WTC11 (cell line): ENCODE measurements at regions of chr10 and their contacts with region 1.

Region 1: GRCh38 chr10:71270301-71271220 is 48.5 kb upstream of the SLC29A3 start:
- DNase-seq: peak; percentile 72
- ATAC-seq: peak; percentile 68
- H3K4me3 Mint-ChIP-seq: peak overlapping the region; percentile 57
- H3K27ac Mint-ChIP-seq: peak overlapping the region; percentile 98
- H3K4me1 Mint-ChIP-seq: peaks cover 64% of the 10 kb centered on the region
- H3K27me3 Mint-ChIP-seq: no peaks in the 10 kb centered on the region
- CTCF ChIP-seq: no peak; the same call in 1 of the 2 replicates

Region 2: DNA sequence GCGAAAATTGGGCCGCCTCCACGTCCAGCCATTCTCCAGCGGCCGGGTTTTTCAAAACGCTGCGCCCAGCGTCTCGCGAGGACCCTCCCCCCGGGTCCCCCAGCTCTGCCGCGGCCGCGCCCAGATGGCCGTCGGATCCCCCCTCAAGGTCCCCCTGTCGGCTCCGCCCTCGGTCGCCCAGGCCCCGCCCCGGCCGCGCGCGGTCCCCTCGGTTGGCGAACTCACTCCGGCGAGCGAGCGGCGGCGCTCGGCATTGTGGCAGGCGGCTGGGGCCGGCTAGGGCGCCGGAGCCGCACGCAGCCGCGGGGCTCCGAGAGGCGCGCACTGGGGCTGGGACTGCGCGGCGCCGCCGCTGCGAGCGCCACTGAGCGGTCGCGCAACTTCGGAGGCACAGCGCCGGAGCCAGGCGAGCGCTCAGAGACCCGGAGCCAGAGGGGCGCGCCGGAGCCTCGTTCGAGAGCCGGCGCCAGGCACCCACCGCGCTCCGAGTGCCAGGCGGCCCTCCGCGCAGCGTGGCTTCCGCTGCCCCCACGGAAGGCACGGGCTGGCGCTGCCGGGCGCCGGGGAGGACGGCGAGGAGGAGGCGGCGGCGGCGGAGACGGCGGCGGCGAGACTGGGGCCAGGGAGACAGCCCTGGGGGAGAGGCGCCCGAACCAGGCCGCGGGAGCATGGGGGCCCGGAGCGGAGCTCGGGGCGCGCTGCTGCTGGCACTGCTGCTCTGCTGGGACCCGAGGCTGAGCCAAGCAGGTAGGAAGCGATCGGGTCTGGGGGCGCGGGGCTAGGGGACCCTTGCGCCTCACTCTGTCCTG is 58.0 kb before region 1 on chr10 and contains the start of gene UNC5B:
- CTCF ChIA-PET with region 1: interaction called, 67 read pairs
- POLR2A ChIA-PET with region 1: interaction called, 10 read pairs
- DNase-seq: peak; percentile 94
- ATAC-seq: peak; percentile 72
- H3K4me3 Mint-ChIP-seq: peak within 1 kb of the TSS; percentile 87
- H3K27ac Mint-ChIP-seq: 0 out of 2 replicates have a peak within 1 kb of the TSS, but pooled peaks have one; percentile 23
- H3K4me1 Mint-ChIP-seq: peaks cover 51% of the 10 kb centered on the region
- H3K27me3 Mint-ChIP-seq: peaks cover 41% of the 10 kb centered on the region
- CTCF ChIP-seq: 0 out of 2 replicates have a peak, but pooled peaks have one; percentile 10
- total RNA-seq, gene UNC5B: 31.2 to 49.6 TPM (median 31.6 TPM) in 3 replicates

Region 3: DNA sequence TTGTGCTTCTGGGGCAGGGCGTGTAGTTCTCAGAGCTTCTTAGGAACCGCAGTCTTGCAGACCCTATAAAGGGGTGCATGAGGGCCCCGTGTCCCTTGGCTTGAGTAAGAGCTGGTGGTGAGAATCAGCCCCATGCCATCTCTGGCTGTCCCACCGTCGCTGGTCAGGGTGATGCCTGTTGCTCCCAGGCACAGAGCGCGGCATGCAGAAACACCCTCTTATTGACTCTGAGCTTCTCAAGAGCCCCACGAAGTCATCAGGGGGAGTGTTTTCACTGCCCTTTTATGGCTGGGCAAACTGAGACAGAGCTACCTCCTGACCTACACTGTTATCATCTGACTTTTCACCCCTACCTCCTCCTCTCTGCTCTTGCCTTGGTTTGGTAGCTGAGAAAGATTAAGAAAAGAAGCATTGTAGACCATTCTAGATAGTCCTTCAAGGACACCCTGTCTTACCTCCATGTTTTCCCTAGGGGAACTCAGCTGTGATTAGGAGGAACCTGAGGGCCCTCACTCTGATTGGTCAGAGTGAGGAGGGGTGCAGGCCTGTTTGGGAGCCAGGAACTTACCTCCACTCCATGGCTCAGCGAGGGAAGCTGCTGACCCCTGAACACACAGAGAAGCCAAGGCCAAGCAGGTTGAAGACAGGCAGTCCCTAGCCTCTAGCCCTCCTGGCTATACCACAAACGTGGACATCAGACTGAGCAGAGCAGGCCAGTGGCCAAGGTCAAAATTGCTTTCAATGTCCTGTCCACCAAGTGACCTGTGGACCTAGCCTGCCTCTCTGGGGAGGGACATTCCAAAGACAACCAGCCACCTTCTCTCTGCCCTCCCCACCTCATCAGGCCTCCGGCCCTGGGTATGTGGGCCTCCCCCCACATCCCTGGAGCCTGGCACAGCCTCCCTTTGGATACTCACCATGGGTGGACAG is 40.6 kb before region 1 on chr10:
- CTCF ChIA-PET with region 1: interaction called, 11 read pairs
- POLR2A ChIA-PET with region 1: no interaction called
- DNase-seq: no peak
- ATAC-seq: no peak
- H3K4me3 Mint-ChIP-seq: no peak overlapping the region
- H3K27ac Mint-ChIP-seq: no peak overlapping the region; the same call in 1 of the 2 replicates
- H3K4me1 Mint-ChIP-seq: peaks cover 53% of the 10 kb centered on the region
- H3K27me3 Mint-ChIP-seq: no peaks in the 10 kb centered on the region
- CTCF ChIP-seq: no peak

Region 4: GRCh38 chr10:71244431-71245419 is 25.8 kb before region 1 on chr10:
- CTCF ChIA-PET with region 1: interaction called, 13 read pairs
- POLR2A ChIA-PET with region 1: no interaction called
- DNase-seq: no peak
- ATAC-seq: no peak
- H3K4me3 Mint-ChIP-seq: no peak overlapping the region
- H3K27ac Mint-ChIP-seq: no peak overlapping the region
- H3K4me1 Mint-ChIP-seq: peaks cover 27% of the 10 kb centered on the region
- H3K27me3 Mint-ChIP-seq: no peaks in the 10 kb centered on the region
- CTCF ChIP-seq: no peak

Region 5: DNA sequence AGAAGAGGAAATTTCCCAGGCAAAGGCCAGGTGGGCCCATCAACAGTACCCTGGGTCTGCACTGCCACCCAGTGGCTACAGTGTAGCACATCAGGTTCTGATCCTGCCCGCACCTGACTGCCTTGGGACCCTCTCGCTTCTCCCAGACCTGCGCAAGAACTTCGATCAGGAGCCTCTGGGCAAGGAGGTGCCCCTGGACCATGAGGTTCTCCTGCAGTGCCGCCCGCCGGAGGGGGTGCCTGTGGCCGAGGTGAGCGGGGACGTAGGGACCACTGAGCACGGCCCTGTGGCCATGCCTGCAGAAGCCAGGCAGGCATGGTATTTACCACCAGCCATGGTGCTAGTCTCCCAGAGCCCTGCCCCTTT is 14.6 kb after region 1 on chr10:
- CTCF ChIA-PET with region 1: interaction called, 57 read pairs
- POLR2A ChIA-PET with region 1: no interaction called
- DNase-seq: peak; percentile 77
- ATAC-seq: peak; percentile 89
- H3K4me3 Mint-ChIP-seq: no peak overlapping the region
- H3K27ac Mint-ChIP-seq: no peak overlapping the region
- H3K4me1 Mint-ChIP-seq: peaks cover 7% of the 10 kb centered on the region
- H3K27me3 Mint-ChIP-seq: no peaks in the 10 kb centered on the region
- CTCF ChIP-seq: peak; percentile 75